CD4-positive, alpha-beta memory T cell (primary cell): ENCODE measurements at regions of chr19 and their contacts with region 1.

Region 1: DNA sequence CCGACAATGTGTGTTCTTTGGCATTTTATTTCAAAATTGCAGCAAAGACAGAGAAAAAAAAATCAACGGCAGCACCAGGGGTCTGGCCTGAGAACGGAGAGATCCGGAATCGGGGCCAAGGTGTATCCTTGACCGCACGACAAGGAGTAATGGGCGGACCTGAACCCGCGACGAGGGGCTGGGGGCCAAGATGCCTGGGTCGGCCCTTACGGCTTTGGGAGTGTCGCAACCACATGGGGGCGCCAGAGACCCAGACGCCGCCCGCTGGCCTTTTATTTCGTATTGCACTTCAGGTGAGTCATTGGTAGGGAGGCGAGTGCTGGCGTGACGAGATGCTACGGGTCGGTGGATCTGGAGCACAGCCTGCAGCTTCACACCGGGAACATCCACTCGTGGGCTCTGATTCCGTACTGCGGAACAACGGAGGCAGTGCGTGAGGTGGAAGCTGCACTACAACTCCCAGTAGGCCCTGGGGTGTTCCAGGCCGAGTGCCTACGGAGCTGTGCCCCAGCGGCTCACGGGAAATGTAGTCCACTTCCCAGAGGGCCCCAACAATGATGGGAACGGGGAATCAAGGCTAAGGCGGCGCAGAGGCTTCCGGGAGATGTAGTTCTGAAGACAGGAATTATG is 15.7 kb downstream of the BCAT2 start:
- DNase-seq: peak; percentile 86 to 87 (median 86)
- H3K4me3 ChIP-seq: peak overlapping the region; percentile 48 to 78
- H3K4me3 Mint-ChIP-seq: peak overlapping the region; percentile 94 to 98 (median 95)
- H3K27ac ChIP-seq: peak overlapping the region; percentile 70
- H3K27ac Mint-ChIP-seq: peak overlapping the region; percentile 64 to 97 (median 96)
- H3K4me1 ChIP-seq: peaks cover 5% of the 10 kb centered on the region
- H3K4me1 Mint-ChIP-seq: peaks cover 4 to 16% (median 6%) of the 10 kb centered on the region in 4 donors
- H3K27me3 ChIP-seq: no peaks in the 10 kb centered on the region
- H3K27me3 Mint-ChIP-seq: no peaks in the 10 kb centered on the region

Region 2: GRCh38 chr19:48806518-48806817 is 11.3 kb after region 1 on chr19:
- CTCF ChIA-PET with region 1: interaction called, 19 read pairs
- POLR2A ChIA-PET with region 1: interaction called, 13 read pairs
- intact Hi-C with region 1: loop called (anchors 1 kb)
- DNase-seq: peak in 4 of 5 donors; percentile 42 to 60 (median 54)
- H3K4me3 ChIP-seq: no peak overlapping the region
- H3K4me3 Mint-ChIP-seq: peak overlapping the region in 2 of 8 donors; percentile 59 to 75
- H3K27ac ChIP-seq: no peak overlapping the region
- H3K27ac Mint-ChIP-seq: peak overlapping the region in 3 of 7 donors; percentile 64 to 78 (median 74)
- H3K4me1 ChIP-seq: peaks cover 13% of the 10 kb centered on the region
- H3K4me1 Mint-ChIP-seq: peaks cover 13 to 34% (median 23%) of the 10 kb centered on the region in 4 donors
- H3K27me3 ChIP-seq: no peaks in the 10 kb centered on the region
- H3K27me3 Mint-ChIP-seq: no peaks in the 10 kb centered on the region

Region 3: DNA sequence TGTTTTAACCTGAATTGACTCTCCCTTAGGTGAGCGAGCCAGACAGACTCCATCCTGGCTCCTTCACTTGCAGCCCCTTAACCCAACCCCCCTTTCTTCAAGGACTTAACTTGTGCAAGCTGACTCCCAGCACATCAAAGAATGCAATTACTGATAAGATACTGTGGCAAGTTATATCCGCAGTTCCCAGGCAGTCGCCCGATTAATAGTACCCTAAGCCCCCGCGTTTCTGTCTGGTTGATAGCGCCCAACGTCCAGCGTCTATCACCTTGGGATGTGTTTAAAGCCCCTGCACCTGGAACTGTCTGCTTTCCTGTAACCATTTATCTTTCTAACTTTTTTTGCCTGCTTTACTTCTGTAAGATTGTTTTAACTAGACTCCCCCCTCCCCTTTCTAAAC is 34.9 kb after region 1 on chr19:
- CTCF ChIA-PET with region 1: interaction called, 15 read pairs
- POLR2A ChIA-PET with region 1: interaction called, 3 read pairs
- intact Hi-C with region 1: loop called (anchors 1 kb)
- DNase-seq: no peak
- H3K4me3 ChIP-seq: no peak overlapping the region
- H3K4me3 Mint-ChIP-seq: no peak overlapping the region
- H3K27ac ChIP-seq: no peak overlapping the region
- H3K27ac Mint-ChIP-seq: no peak overlapping the region
- H3K4me1 ChIP-seq: no peaks in the 10 kb centered on the region
- H3K4me1 Mint-ChIP-seq: peaks cover 0 to 5% (median 0%) of the 10 kb centered on the region in 4 donors
- H3K27me3 ChIP-seq: no peaks in the 10 kb centered on the region
- H3K27me3 Mint-ChIP-seq: peaks cover 0 to 3% of the 10 kb centered on the region in 2 donors

Region 4: DNA sequence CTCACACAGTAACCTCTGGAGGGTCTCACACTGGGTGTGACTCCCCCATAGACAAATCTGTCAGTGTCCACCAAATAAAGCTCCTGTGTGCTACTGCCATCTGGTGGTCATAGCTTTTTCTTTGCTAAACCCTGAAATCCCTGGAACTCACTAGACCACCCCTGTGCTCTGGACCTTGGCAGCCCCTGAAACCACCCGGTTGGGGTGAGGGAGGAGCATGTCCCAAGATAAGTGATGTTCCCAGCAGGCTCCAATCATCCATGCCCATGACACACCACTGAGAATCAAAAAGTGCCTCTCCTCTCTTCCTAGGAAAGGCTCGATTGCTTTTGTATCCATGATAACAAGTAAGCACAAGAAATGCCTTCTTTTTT is 47.6 kb after region 1 on chr19:
- CTCF ChIA-PET with region 1: interaction called, 140 read pairs
- POLR2A ChIA-PET with region 1: interaction called, 12 read pairs
- intact Hi-C with region 1: loop called (anchors 1 kb)
- DNase-seq: peak; percentile 42 to 60 (median 55)
- H3K4me3 ChIP-seq: no peak overlapping the region
- H3K4me3 Mint-ChIP-seq: peak overlapping the region in 1 of 8 donors; percentile 33
- H3K27ac ChIP-seq: no peak overlapping the region
- H3K27ac Mint-ChIP-seq: no peak overlapping the region
- H3K4me1 ChIP-seq: no peaks in the 10 kb centered on the region
- H3K4me1 Mint-ChIP-seq: peaks cover 0 to 4% (median 2%) of the 10 kb centered on the region in 4 donors
- H3K27me3 ChIP-seq: no peaks in the 10 kb centered on the region
- H3K27me3 Mint-ChIP-seq: no peaks in the 10 kb centered on the region

Region 5: DNA sequence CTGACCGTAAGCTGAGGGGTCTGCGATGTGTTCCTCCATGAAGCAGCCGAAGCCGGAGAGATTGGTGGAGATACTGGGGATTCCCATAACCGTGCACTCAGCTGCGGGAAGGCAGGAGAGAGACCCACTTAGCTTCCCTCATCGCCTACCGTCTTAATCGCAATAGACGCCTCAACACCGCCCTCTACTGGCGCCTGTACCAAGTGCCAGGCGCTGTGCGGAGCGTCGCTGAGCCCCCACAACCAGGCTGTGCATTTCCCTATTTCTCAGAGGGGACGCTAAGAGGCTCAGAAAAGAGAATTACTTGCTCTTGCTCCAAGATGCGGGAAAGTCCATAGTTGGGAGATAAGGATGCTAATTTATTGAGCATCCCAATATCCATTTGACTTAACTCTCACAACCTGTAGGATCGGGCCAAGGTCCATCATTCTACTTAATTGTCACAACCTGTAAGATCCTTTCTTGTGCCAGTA is 175.8 kb after region 1 on chr19:
- CTCF ChIA-PET with region 1: interaction called, 71 read pairs
- POLR2A ChIA-PET with region 1: interaction called, 20 read pairs
- intact Hi-C with region 1: loop called (anchors 1 kb)
- DNase-seq: peak; percentile 67 to 77 (median 68)
- H3K4me3 ChIP-seq: no peak overlapping the region
- H3K4me3 Mint-ChIP-seq: peak overlapping the region in 1 of 8 donors; percentile 6
- H3K27ac ChIP-seq: no peak overlapping the region
- H3K27ac Mint-ChIP-seq: peak overlapping the region in 5 of 7 donors; percentile 27 to 80 (median 64)
- H3K4me1 ChIP-seq: peaks cover 19% of the 10 kb centered on the region
- H3K4me1 Mint-ChIP-seq: peaks cover 8 to 24% (median 17%) of the 10 kb centered on the region in 4 donors
- H3K27me3 ChIP-seq: no peaks in the 10 kb centered on the region
- H3K27me3 Mint-ChIP-seq: no peaks in the 10 kb centered on the region